ENCODE measurements at regions of chr2 and their contacts with region 1.

Region 1: GRCh38 chr2:10028988-10029874 is 14.1 kb upstream of the KLF11 start:
- DNase-seq: peak; percentile 66 to 75
- ATAC-seq: peak; percentile 96 to 98 (median 97)
- H3K4me3 ChIP-seq: peak overlapping the region; percentile 21
- H3K4me3 Mint-ChIP-seq: peak overlapping the region; percentile 78
- H3K27ac ChIP-seq: peak overlapping the region; percentile 89
- H3K27ac Mint-ChIP-seq: peak overlapping the region; percentile 93 to 94
- H3K4me1 ChIP-seq: peaks cover 62% of the 10 kb centered on the region
- H3K4me1 Mint-ChIP-seq: peaks cover 26 to 42% of the 10 kb centered on the region in 2 donors
- H3K27me3 ChIP-seq: no peaks in the 10 kb centered on the region
- H3K27me3 Mint-ChIP-seq: no peaks in the 10 kb centered on the region
- CTCF ChIP-seq: no peak

Region 2: GRCh38 chr2:9984217-9984739 is 45.0 kb before region 1 on chr2:
- intact Hi-C with region 1: loop called (anchors 5 kb)
- DNase-seq: peak in 1 of 2 donors; percentile 84
- ATAC-seq: peak; percentile 81 to 95 (median 89)
- H3K4me3 ChIP-seq: no peak overlapping the region
- H3K4me3 Mint-ChIP-seq: no peak overlapping the region
- H3K27ac ChIP-seq: no peak overlapping the region
- H3K27ac Mint-ChIP-seq: peak overlapping the region in 1 of 2 donors; percentile 29
- H3K4me1 ChIP-seq: peaks cover 6% of the 10 kb centered on the region
- H3K4me1 Mint-ChIP-seq: peaks cover 6 to 12% of the 10 kb centered on the region in 2 donors
- H3K27me3 ChIP-seq: no peaks in the 10 kb centered on the region
- H3K27me3 Mint-ChIP-seq: peaks cover 3 to 13% of the 10 kb centered on the region in 2 donors
- CTCF ChIP-seq: peak; percentile 80

Measured in natural killer cell (primary cell).